ENCODE measurements at regions of chr17 and their contacts with region 1.

Region 1: GRCh38 chr17:32127158-32127897 is 15.0 kb upstream of the RHOT1 start:
- DNase-seq: peak; percentile 93
- ATAC-seq: peak; percentile 100
- H3K4me3 Mint-ChIP-seq: peak overlapping the region; percentile 88
- H3K27ac Mint-ChIP-seq: peak overlapping the region; percentile 93
- H3K4me1 Mint-ChIP-seq: peaks cover 33% of the 10 kb centered on the region
- H3K27me3 Mint-ChIP-seq: no peaks in the 10 kb centered on the region

Region 2: GRCh38 chr17:32111141-32111771 is 16.1 kb before region 1 on chr17:
- CTCF ChIA-PET with region 1: interaction called, 17 read pairs
- POLR2A ChIA-PET with region 1: interaction called, 5 read pairs
- DNase-seq: peak; percentile 62
- ATAC-seq: peak; percentile 65
- H3K4me3 Mint-ChIP-seq: no peak overlapping the region
- H3K27ac Mint-ChIP-seq: no peak overlapping the region
- H3K4me1 Mint-ChIP-seq: peaks cover 32% of the 10 kb centered on the region
- H3K27me3 Mint-ChIP-seq: peaks cover 2% of the 10 kb centered on the region

Region 3: GRCh38 chr17:32311028-32311536 is 183.8 kb after region 1 on chr17:
- CTCF ChIA-PET with region 1: no interaction called
- POLR2A ChIA-PET with region 1: no interaction called
- DNase-seq: no peak
- ATAC-seq: no peak
- H3K4me3 Mint-ChIP-seq: no peak overlapping the region
- H3K27ac Mint-ChIP-seq: no peak overlapping the region
- H3K4me1 Mint-ChIP-seq: no peaks in the 10 kb centered on the region
- H3K27me3 Mint-ChIP-seq: peaks cover 24% of the 10 kb centered on the region

Measured in activated CD8-positive, alpha-beta T cell treated with anti-CD3 and anti-CD28 coated beads, Interleukin-2, amount 10 ng/mL, durations not matched to agents 7 days and 5 days (primary cell).